Dorsolateral prefrontal cortex (tissue), 120 donors: ENCODE measurements at regions of chr1 and their contacts with region 1.

Region 1: DNA sequence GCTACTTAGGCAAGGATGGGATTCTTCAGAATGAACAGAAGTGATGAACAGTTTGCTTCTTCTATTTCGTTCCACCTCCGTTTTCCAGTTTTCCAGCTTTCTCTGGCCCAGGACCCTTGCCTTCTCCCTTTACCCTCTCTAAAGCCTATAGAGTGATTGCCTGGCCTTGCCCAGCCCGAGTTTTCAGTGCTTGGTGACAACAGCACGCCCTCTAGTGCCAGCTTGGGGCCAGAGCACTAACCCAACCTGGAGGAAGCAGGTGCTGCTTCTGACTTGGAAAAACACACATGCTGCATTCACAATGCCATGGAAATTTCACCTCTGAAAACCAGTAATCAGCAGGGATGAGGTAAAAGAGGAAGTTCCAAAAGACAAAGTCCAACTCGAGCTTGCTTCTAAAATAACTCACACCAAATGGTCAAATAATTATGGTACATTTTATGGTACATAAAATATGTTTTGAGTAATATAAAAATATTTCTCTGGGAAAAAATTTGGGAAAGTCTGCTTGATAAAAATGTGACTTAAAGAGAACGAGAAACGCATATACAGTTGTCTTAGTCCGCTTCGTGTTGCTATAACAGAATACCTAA is 26.1 kb downstream of the UBE2T start:
- DNase-seq: peak; percentile 57 to 83 (median 76)
- H3K4me3 ChIP-seq: no peak overlapping the region
- H3K27ac ChIP-seq: no peak overlapping the region
- H3K27me3 ChIP-seq: no peaks in the 10 kb centered on the region
- CTCF ChIP-seq: peak; percentile 46 to 97 (median 90)

Region 2: GRCh38 chr1:202192770-202193613 is 122.7 kb before region 1 on chr1:
- intact Hi-C with region 1: loop called in 1 of 2 experiments (anchors 5 kb)
- DNase-seq: peak in 7 of 10 donors; percentile 32 to 67 (median 42)
- H3K4me3 ChIP-seq: peak overlapping the region in 14 of 59 donors; percentile 1 to 56 (median 39)
- H3K27ac ChIP-seq: no peak overlapping the region
- H3K27me3 ChIP-seq: peaks cover 0 to 34% (median 18%) of the 10 kb centered on the region in 45 donors
- CTCF ChIP-seq: peak; percentile 48 to 91 (median 84)